Transverse colon (tissue), 4 donors: ENCODE measurements at regions of chr4 and their contacts with region 1.

Region 1: DNA sequence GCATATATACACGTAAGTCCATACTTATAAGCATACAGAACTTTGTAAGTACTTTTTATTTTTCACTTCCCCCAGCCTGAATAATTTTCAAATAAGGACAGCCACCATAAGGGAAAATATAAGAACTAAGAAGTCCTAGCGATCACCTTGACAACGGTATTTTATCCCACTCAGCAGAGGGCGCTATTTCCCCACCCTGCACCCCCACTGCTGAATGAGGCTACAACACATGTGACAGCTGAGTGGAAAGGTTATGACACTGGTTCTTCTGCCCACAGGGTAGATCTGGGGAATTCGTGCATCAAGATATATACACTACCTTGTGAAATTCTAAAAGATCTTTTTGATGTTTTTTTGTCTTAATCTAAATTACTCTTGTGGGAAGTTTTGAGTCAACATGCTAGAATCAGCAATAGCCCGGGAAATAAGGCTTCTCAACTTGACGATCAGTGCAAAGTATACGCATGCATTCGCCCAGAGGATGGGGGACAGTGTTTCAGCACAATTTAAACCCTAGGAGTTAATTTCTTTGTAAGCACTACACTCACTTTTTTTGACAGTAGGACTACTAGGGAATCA is 151.5 kb downstream of the CORIN start:
- DNase-seq: peak; percentile 57
- H3K4me3 ChIP-seq: no peak overlapping the region
- H3K27ac ChIP-seq: no peak overlapping the region
- H3K4me1 ChIP-seq: no peaks in the 10 kb centered on the region
- H3K27me3 ChIP-seq: peaks cover 12% of the 10 kb centered on the region
- CTCF ChIP-seq: peak; percentile 50 to 62 (median 58)
- EP300 ChIP-seq: no peak
- POLR2A ChIP-seq: no peak

Region 2: DNA sequence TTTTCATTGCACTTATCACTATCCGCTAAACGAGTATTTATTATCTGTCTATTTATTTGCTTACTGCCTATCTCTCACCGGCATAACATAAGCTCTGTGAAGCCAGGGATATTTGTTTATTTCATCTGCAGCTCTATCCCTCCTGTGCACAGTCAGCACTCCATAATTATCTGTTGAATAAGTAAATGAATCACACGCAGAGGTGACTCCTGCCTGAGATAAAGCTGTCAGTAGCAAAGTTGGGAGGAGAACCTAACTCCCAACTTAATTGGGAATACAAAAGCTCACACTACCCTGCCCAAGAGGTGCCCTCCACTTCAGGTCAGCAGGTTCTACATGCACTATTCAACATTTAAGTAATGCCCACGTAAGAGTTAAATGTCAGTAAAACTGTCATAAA is 65.8 kb after region 1 on chr4:
- in situ Hi-C with region 1: no loop called
- intact Hi-C with region 1: no loop called
- DNase-seq: no peak
- H3K4me3 ChIP-seq: no peak overlapping the region
- H3K27ac ChIP-seq: no peak overlapping the region
- H3K4me1 ChIP-seq: no peaks in the 10 kb centered on the region
- H3K27me3 ChIP-seq: no peaks in the 10 kb centered on the region
- CTCF ChIP-seq: no peak
- EP300 ChIP-seq: no peak
- POLR2A ChIP-seq: no peak

Region 3: GRCh38 chr4:47836641-47837093 is 150.3 kb after region 1 on chr4:
- in situ Hi-C with region 1: loop called in 1 of 4 experiments (anchors 25 kb)
- intact Hi-C with region 1: no loop called
- DNase-seq: peak; percentile 77
- H3K4me3 ChIP-seq: peak overlapping the region; percentile 31 to 64 (median 38)
- H3K27ac ChIP-seq: no peak overlapping the region
- H3K4me1 ChIP-seq: peaks cover 0 to 26% (median 24%) of the 10 kb centered on the region in 4 donors
- H3K27me3 ChIP-seq: peaks cover 24% of the 10 kb centered on the region
- CTCF ChIP-seq: peak; percentile 44 to 57 (median 45)
- EP300 ChIP-seq: no peak
- POLR2A ChIP-seq: no peak

Region 4: DNA sequence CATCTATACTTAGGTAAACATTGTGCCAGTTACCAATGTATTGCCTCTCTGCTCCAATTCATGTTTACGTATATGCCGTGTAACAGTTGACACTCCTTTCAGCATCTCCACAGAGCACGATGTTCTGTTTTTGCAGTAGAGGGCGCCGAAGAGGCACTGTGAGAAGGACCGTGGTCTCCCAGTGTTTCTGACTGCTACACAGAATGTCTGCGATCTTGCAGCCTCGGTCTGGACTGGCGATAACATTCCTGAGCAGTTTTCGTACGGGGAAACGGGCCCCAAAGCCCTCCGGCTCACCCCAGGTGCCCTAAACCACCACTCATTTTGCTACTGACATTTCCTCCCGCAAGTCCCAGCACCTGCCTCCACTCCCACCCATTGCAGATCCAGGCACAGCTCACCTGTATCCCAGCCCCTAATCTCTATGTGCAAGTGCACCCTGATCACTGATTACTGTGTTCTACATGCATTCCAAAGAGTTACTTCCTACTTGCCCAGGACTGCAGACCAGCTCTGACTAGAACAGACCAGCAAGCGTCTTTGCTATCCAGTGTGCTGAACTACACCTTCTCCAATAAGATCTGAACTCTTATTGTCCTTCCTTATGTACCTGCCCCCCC is 240.4 kb after region 1 on chr4:
- in situ Hi-C with region 1: loop called in 2 of 4 experiments (anchors 10 to 25 kb)
- intact Hi-C with region 1: no loop called
- DNase-seq: peak; percentile 51
- H3K4me3 ChIP-seq: peak overlapping the region in 2 of 4 donors; percentile 3 to 27
- H3K27ac ChIP-seq: no peak overlapping the region
- H3K4me1 ChIP-seq: peaks cover 0 to 7% (median 2%) of the 10 kb centered on the region in 4 donors
- H3K27me3 ChIP-seq: no peaks in the 10 kb centered on the region
- CTCF ChIP-seq: peak; percentile 43 to 58 (median 56)
- EP300 ChIP-seq: no peak
- POLR2A ChIP-seq: no peak

Region 5: DNA sequence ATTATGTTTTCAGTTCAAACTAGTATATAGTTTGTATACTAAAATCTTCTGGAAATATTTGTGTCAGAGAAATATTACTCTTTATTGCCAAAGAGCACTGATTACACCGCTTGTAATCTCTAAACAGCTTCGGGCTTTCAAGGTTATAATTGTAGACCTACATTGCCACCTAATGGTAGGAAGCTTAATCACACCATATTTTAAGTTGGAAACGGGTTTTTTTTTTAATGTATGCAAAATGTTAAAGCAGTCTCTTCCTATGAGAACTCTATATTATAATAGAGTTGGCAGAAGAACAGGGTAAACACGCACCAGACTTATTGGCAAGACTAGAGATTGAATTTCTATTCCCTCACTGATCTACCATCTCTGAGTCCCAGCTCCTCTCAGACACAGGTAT is 247.5 kb after region 1 on chr4:
- in situ Hi-C with region 1: loop called in 2 of 4 experiments (anchors 10 to 25 kb)
- intact Hi-C with region 1: no loop called
- DNase-seq: no peak
- H3K4me3 ChIP-seq: no peak overlapping the region
- H3K27ac ChIP-seq: no peak overlapping the region
- H3K4me1 ChIP-seq: peaks cover 0 to 7% (median 0%) of the 10 kb centered on the region in 4 donors
- H3K27me3 ChIP-seq: no peaks in the 10 kb centered on the region
- CTCF ChIP-seq: peak; percentile 50 to 59 (median 57)
- EP300 ChIP-seq: no peak
- POLR2A ChIP-seq: no peak

Region 6: GRCh38 chr4:47945930-47946726 is 259.7 kb after region 1 on chr4:
- in situ Hi-C with region 1: loop called in 3 of 4 experiments (anchors 10 to 25 kb)
- intact Hi-C with region 1: no loop called
- DNase-seq: no peak
- H3K4me3 ChIP-seq: no peak overlapping the region
- H3K27ac ChIP-seq: no peak overlapping the region
- H3K4me1 ChIP-seq: no peaks in the 10 kb centered on the region
- H3K27me3 ChIP-seq: no peaks in the 10 kb centered on the region
- CTCF ChIP-seq: no peak
- EP300 ChIP-seq: no peak
- POLR2A ChIP-seq: no peak